PC-9 (cell line): ENCODE measurements at regions of chr17 and their contacts with region 1.

Region 1: GRCh38 chr17:42577532-42578281 is at the start of gene PSMC3IP:
- DNase-seq: peak; percentile 84 to 91
- H3K4me3 ChIP-seq: peak within 1 kb of the TSS; percentile 94
- H3K27ac ChIP-seq: peak within 1 kb of the TSS; percentile 31
- H3K4me1 ChIP-seq: peaks cover 17% of the 10 kb centered on the region; the same call in 1 of the 2 replicates
- H3K27me3 ChIP-seq: no peaks in the 10 kb centered on the region
- CTCF ChIP-seq: peak; percentile 53
- total RNA-seq, gene PSMC3IP: 10.2 and 13.4 TPM in 2 replicates

Region 2: GRCh38 chr17:42744806-42745617 is 167.3 kb after region 1 on chr17 and contains the start of gene EZH1:
- CTCF ChIA-PET with region 1: no interaction called
- POLR2A ChIA-PET with region 1: interaction called, 12 read pairs
- intact Hi-C with region 1: no loop called
- DNase-seq: peak; percentile 75 to 92
- H3K4me3 ChIP-seq: peak within 1 kb of the TSS; percentile 78
- H3K27ac ChIP-seq: peak within 1 kb of the TSS; percentile 65
- H3K4me1 ChIP-seq: peaks cover 13% of the 10 kb centered on the region
- H3K27me3 ChIP-seq: no peaks in the 10 kb centered on the region
- CTCF ChIP-seq: no peak
- total RNA-seq, gene EZH1: 22.8 and 24.8 TPM in 2 replicates

Region 3: DNA sequence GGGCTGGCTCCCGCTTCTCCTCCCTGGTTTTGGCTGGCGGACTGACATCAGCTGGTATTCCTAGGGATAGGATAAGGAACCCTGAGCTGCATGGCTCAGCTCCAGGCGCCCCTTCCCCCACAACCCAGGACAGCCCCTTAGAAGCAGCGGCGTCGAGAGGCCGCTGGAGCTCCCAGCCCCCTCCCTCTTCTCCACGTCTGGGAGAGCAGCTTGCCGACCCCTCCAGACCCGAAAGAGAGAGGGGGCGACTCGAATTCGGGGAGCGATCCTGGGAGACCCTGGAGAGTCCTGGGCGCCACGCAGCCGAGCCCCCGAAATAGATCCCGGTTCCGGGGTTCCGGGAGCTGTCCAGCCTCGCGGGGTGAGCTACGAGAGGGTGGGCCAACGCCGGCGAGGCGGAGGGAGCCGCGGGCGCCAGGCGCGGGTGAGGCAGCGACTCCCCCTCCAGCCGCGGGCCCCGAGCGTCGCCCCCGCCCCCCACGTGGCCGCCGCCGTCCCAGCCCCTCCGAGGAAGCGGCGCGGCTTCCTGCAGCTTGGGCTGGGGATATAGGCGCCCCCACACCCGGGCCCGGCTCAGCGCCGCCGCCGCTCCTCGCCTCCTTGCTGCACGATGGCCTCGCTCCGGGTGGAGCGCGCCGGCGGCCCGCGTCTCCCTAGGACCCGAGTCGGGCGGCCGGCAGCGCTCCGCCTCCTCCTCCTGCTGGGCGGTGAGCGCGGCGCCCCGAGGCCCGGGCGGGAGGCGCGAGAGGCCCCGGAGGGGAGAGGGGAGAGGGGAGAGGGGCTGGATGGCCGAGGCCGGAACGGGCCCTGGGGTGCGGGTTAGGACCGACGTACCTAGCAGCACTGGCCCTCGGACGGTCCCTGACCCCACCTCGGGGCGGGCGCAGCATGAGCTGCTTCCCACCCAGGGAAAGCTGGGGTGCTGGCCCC is 183.2 kb after region 1 on chr17 and contains the start of gene RAMP2:
- CTCF ChIA-PET with region 1: interaction called, 8 read pairs
- POLR2A ChIA-PET with region 1: interaction called, 4 read pairs
- intact Hi-C with region 1: loop called (anchors 1 kb)
- DNase-seq: peak in 1 of 2 experiments; percentile 18
- H3K4me3 ChIP-seq: peak within 1 kb of the TSS; percentile 18; the same call in 1 of the 2 replicates
- H3K27ac ChIP-seq: no peak within 1 kb of the TSS
- H3K4me1 ChIP-seq: no peaks in the 10 kb centered on the region
- H3K27me3 ChIP-seq: peaks cover 17% of the 10 kb centered on the region
- CTCF ChIP-seq: no peak
- total RNA-seq, gene RAMP2: 1.1 TPM in 1 of 2 replicates, not detected in the other

Region 4: GRCh38 chr17:42819944-42820535 is 242.3 kb after region 1 on chr17:
- CTCF ChIA-PET with region 1: interaction called, 9 read pairs
- POLR2A ChIA-PET with region 1: no interaction called
- intact Hi-C with region 1: loop called (anchors 5 kb)
- DNase-seq: peak; percentile 40 to 58
- H3K4me3 ChIP-seq: no peak overlapping the region
- H3K27ac ChIP-seq: no peak overlapping the region
- H3K4me1 ChIP-seq: peaks cover 10% of the 10 kb centered on the region
- H3K27me3 ChIP-seq: no peaks in the 10 kb centered on the region
- CTCF ChIP-seq: peak; percentile 83

Region 5: DNA sequence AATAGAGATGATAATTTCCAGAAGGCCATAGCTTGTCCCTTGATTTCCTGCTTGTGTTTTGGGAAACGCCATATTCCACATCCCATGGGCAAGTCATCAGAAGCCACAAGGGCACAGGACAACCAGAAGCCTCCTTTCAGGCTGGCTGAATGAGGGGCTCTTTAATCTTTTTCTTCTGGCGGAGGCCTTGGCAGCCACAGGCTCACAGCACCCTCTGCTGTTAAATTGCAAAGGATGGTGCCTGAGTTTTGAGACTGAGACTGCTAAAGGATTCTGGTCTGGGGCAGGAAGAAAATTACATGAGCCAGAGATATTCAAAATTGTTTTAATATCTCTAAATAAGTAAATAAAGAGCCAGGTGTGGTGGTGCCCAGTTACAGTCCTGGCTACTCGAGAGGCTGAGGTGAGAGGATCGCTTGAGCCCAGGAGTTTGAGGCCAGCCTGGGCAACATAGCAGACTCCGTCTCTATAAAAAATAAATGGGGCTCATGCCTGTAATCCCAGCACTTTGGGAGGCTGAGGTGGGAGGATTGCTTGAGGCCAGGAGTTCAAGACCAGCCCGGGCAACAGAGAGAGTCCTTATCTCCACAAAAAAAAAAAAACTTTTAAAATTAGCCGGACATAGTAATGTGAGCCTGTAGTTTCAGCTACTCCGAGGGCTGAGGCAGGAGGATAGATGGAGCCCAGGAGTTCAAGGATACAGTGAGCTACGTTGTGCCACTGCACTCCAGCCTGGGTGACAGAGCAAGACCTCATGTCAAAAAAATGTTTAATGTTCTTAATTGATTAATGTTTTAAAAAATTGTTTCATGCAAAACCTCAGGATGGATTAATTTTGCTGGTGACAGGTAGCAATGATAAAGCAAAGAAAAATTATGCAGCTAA is 360.2 kb after region 1 on chr17:
- CTCF ChIA-PET with region 1: no interaction called
- POLR2A ChIA-PET with region 1: no interaction called
- intact Hi-C with region 1: loop called (anchors 5 kb)
- DNase-seq: peak in 1 of 2 experiments; percentile 42
- H3K4me3 ChIP-seq: no peak overlapping the region
- H3K27ac ChIP-seq: no peak overlapping the region
- H3K4me1 ChIP-seq: no peaks in the 10 kb centered on the region
- H3K27me3 ChIP-seq: no peaks in the 10 kb centered on the region
- CTCF ChIP-seq: peak; percentile 79

Region 6: GRCh38 chr17:43085474-43085873 is 507.8 kb after region 1 on chr17:
- CTCF ChIA-PET with region 1: no interaction called
- POLR2A ChIA-PET with region 1: no interaction called
- intact Hi-C with region 1: no loop called
- DNase-seq: no peak
- H3K4me3 ChIP-seq: no peak overlapping the region
- H3K27ac ChIP-seq: no peak overlapping the region
- H3K4me1 ChIP-seq: no peaks in the 10 kb centered on the region
- H3K27me3 ChIP-seq: no peaks in the 10 kb centered on the region
- CTCF ChIP-seq: no peak